ENCODE measurements at regions of chr2 and their contacts with region 1.

Region 1: GRCh38 chr2:86566158-86566820 is 3.0 kb upstream of the CHMP3 start:
- DNase-seq: no peak
- H3K4me3 ChIP-seq: no peak overlapping the region
- H3K27ac ChIP-seq: no peak overlapping the region
- H3K4me1 ChIP-seq: peaks cover 11% of the 10 kb centered on the region
- H3K27me3 ChIP-seq: no peaks in the 10 kb centered on the region
- CTCF ChIP-seq: no peak

Region 2: DNA sequence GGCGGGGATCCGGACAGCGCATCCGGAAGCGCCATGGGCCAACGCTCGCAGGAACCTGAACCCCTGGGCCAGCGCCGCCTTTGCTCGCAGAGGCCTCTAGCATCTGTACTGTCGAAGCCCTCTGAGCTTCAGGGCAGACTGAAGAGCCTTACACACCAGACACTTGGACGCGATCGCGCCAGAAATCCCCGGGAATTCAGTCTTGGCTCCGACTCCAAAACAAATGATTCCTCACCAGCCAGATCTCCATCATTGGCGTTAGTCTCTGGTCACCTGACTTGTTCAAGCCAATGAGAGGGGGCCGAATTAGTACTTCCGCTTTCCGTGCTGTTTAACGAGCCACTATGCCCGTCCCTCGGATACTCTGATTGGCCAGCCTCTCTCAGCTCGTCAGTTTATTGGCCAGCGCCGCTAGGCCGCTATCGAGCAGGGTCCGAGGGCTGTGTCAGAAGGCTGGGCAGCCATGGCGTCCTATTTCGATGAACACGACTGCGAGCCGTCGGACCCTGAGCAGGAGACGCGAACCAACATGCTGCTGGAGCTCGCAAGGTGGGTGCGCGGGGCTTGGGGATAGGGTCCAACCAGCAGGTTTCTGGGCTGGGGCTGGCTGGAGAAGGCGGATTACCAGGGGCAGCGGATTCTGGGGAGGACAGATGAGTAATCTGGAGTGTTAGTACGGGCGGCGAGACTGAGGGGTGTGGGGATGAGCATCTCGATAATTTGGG is 970.8 kb before region 1 on chr2 and contains the start of gene RNF181:
- CTCF ChIA-PET with region 1: no interaction called
- POLR2A ChIA-PET with region 1: no interaction called
- intact Hi-C with region 1: no loop called
- DNase-seq: peak; percentile 98
- H3K4me3 ChIP-seq: peak within 1 kb of the TSS; percentile 82
- H3K27ac ChIP-seq: peak within 1 kb of the TSS; percentile 83
- H3K4me1 ChIP-seq: no peaks in the 10 kb centered on the region
- H3K27me3 ChIP-seq: no peaks in the 10 kb centered on the region
- CTCF ChIP-seq: no peak
- total RNA-seq, gene RNF181: 78.5 and 99.1 TPM in 2 replicates

Region 3: GRCh38 chr2:86623651-86624541 is 57.6 kb after region 1 on chr2 and contains the start of gene RNF103:
- CTCF ChIA-PET with region 1: no interaction called
- POLR2A ChIA-PET with region 1: no interaction called
- intact Hi-C with region 1: loop called (anchors 5 kb)
- DNase-seq: peak; percentile 95
- H3K4me3 ChIP-seq: peak within 1 kb of the TSS; percentile 79
- H3K27ac ChIP-seq: peak within 1 kb of the TSS; percentile 85
- H3K4me1 ChIP-seq: no peaks in the 10 kb centered on the region
- H3K27me3 ChIP-seq: no peaks in the 10 kb centered on the region
- CTCF ChIP-seq: no peak
- total RNA-seq, gene RNF103: 10.1 and 13.4 TPM in 2 replicates

Measured in A673 (cell line).